Esophagus muscularis mucosa (tissue), 4 donors: ENCODE measurements at regions of chr2 and their contacts with region 1.

Region 1: DNA sequence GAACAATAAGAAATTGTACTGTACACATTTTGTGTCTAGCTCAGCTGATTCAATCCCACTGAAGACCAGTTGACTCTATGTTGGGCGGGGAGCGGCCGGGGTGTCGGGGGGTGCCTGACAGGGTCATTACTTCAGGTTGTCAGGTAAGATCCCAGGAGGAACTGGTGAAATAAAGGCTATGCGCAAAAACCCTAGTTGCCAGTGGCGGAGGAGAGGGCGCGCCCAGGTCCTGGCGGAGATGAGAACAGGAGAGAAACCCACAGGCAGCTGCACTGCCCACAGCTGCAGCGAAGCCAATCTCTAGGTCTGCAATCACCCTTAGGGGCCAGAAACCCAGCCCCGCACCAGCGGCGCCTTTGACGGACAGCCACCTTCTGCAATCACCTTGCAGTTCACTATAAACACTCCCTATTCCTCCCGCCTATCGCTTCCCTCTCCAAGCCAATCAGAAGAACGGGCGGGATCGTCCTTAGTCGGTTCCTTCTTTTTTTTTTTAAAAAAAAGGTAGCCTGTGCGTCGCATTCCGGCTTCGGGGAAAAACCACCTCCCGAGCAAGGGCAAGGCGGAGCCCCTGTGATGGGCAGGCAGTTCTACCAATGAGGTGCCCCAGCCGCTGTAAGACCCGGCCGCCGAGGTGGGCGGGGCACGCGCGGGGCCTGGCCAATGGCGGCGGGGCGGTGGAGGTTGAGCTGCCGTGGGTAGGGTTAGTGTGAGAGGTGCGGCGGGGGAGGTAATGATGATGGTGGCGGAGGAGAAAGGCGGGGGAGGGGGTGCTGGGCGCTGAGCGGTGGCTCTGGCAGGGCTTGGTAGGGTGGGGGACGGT is at the start of gene EHBP1:
- DNase-seq: peak; percentile 100
- H3K4me3 ChIP-seq: peak within 1 kb of the TSS; percentile 82 to 99 (median 93)
- H3K27ac ChIP-seq: peak within 1 kb of the TSS; percentile 95 to 98 (median 96)
- H3K4me1 ChIP-seq: peaks cover 22 to 44% (median 41%) of the 10 kb centered on the region in 4 donors
- H3K27me3 ChIP-seq: no peaks in the 10 kb centered on the region
- CTCF ChIP-seq: no peak
- EP300 ChIP-seq: no peak
- POLR2A ChIP-seq: peak; percentile 37
- total RNA-seq, gene EHBP1: 103 to 199 (median 151) TPM

Region 2: GRCh38 chr2:62456721-62457539 is 248.3 kb before region 1 on chr2:
- intact Hi-C with region 1: loop called (anchors 2 kb)
- DNase-seq: no peak
- H3K4me3 ChIP-seq: peak overlapping the region; percentile 58 to 80 (median 70)
- H3K27ac ChIP-seq: peak overlapping the region; percentile 79 to 87 (median 83)
- H3K4me1 ChIP-seq: peaks cover 13 to 46% (median 36%) of the 10 kb centered on the region in 4 donors
- H3K27me3 ChIP-seq: no peaks in the 10 kb centered on the region
- CTCF ChIP-seq: peak; percentile 94 to 100 (median 98)
- EP300 ChIP-seq: no peak
- POLR2A ChIP-seq: no peak

Region 3: GRCh38 chr2:62505750-62506420 is 199.3 kb before region 1 on chr2 and contains the start of gene TMEM17:
- intact Hi-C with region 1: loop called (anchors 5 kb)
- DNase-seq: peak; percentile 96
- H3K4me3 ChIP-seq: peak within 1 kb of the TSS; percentile 65 to 88 (median 74)
- H3K27ac ChIP-seq: peak within 1 kb of the TSS; percentile 88 to 95 (median 90)
- H3K4me1 ChIP-seq: peaks cover 10 to 21% (median 18%) of the 10 kb centered on the region in 4 donors
- H3K27me3 ChIP-seq: no peaks in the 10 kb centered on the region
- CTCF ChIP-seq: no peak
- EP300 ChIP-seq: no peak
- POLR2A ChIP-seq: no peak
- total RNA-seq, gene TMEM17: 1.9 to 3.8 (median 2.4) TPM

Region 4: DNA sequence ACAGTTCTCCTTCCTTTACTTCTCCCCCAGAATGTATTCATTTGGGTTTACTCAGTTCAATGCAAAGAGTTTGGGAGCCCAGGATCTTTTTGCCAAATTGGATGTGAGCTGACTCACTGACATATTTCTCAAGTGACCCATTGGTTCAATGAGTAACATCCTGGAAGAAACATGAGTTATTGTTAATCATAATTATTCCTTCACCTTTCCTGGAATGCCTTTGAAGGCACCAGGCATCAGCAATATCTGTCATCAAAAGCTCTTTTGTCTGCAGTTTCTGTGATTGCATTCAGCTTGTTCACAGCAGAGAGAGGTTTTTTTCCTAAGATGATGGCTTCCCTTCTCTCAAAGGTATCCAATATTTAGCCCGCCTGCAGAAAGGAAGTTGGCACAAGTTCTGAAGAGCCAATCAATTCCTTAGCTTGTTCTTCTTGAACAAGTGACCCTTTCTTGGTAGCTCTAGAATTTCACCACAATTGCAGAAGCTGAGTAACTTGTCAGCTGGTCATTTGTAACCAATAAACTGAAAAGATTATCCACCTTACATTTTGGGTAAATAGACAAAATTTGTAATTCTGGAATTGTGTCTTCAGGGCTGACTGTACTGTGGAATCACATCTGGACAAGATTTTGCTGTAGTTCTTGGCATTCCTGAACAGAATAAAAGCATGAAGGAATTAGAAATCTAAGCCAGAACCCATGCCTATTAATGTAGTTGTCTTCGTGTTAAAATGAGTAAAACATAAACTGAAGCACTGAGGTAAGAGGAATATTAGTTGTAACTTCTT is 127.0 kb before region 1 on chr2:
- intact Hi-C with region 1: loop called (anchors 5 kb)
- DNase-seq: no peak
- H3K4me3 ChIP-seq: no peak overlapping the region
- H3K27ac ChIP-seq: peak overlapping the region; percentile 31 to 75 (median 52)
- H3K4me1 ChIP-seq: peaks cover 0 to 56% (median 43%) of the 10 kb centered on the region in 4 donors
- H3K27me3 ChIP-seq: no peaks in the 10 kb centered on the region
- CTCF ChIP-seq: no peak
- EP300 ChIP-seq: no peak
- POLR2A ChIP-seq: no peak

Region 5: DNA sequence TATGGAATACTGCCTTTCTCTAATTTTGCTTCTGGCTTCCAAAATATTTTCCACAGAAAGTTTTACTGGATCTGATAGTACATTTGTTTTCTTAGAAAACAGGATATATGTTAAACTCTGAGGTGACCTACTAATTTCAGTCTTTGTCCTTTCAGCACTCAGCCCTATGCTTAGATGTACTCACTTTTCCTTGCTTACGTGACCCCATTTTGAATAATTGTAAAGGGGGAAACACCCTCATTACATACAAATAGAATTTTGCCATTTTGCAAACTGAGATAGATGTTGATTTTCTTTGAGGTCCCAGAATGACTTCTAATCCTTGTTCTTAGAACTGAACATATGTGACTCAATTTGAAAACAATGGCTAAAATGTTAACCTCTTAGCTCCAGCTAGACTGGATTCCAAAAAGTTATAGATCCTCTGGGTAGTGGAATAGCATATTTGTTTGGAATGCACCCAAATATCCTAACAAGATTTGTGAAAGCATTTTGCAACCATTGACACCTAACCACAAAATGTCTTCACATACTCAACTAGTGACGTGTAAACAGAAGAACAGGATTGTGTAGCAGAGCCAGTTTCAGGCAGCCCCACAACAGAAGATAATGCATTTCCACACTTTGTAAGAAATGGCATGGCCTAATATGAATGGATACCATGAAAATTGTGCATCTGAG is 44.5 kb before region 1 on chr2:
- intact Hi-C with region 1: loop called (anchors 5 kb)
- DNase-seq: no peak
- H3K4me3 ChIP-seq: peak overlapping the region in 1 of 4 donors; percentile 12
- H3K27ac ChIP-seq: peak overlapping the region; percentile 76 to 82 (median 81)
- H3K4me1 ChIP-seq: peaks cover 29 to 64% (median 59%) of the 10 kb centered on the region in 4 donors
- H3K27me3 ChIP-seq: no peaks in the 10 kb centered on the region
- CTCF ChIP-seq: no peak
- EP300 ChIP-seq: no peak
- POLR2A ChIP-seq: no peak

Region 6: DNA sequence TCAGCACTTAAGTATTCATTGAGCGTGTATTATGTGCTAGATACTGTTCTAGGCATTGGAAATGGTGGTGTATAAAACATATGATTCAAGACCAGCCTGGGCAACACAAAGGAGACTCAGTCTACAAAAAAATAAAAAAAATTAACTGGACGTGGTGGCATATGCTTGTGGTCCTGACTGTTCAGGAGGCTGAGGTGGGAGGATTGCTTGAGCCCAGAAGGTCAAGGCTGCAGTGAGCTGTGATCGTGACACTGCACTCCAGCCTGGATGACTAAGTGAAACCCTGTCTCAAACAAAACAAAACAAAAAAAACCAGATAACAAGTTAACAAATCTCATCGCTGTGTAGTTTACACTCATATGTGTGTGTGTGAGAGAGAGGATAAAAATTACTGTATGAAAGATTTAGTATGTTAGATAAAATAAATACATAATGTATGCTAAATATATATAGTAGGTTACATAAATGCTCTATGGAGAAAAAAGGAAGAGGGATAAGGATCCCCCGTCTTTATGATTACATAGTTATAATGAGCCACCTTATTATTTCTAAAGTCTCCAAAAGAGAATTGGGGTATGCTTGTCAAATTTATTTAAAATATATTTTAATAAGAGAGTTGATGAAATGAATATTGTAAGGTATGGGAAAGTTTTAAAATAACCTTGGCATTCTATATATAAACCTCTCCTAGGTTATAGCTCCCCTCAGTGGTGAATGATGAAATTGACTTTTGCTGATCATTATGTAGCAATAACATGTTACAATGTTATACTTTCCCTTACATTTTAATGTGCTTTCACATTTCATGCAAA is 69.5 kb after region 1 on chr2:
- intact Hi-C with region 1: loop called (anchors 5 kb)
- DNase-seq: no peak
- H3K4me3 ChIP-seq: no peak overlapping the region
- H3K27ac ChIP-seq: peak overlapping the region; percentile 0 to 32 (median 14)
- H3K4me1 ChIP-seq: peaks cover 0 to 40% (median 38%) of the 10 kb centered on the region in 4 donors
- H3K27me3 ChIP-seq: no peaks in the 10 kb centered on the region
- CTCF ChIP-seq: peak; percentile 74 to 84 (median 82)
- EP300 ChIP-seq: no peak
- POLR2A ChIP-seq: no peak